Colonic mucosa (tissue), 4 donors: ENCODE measurements at regions of chrX and their contacts with region 1.

Region 1: GRCh38 chrX:13487731-13488523 is 81.5 kb upstream of the EGFL6 start:
- DNase-seq: peak; percentile 70
- H3K4me3 ChIP-seq: no peak overlapping the region
- H3K27ac ChIP-seq: peak overlapping the region; percentile 65
- H3K4me1 ChIP-seq: no peaks in the 10 kb centered on the region
- H3K27me3 ChIP-seq: no peaks in the 10 kb centered on the region
- CTCF ChIP-seq: peak; percentile 45

Region 2: GRCh38 chrX:12946838-12947544 is 540.9 kb before region 1 on chrX:
- intact Hi-C with region 1: loop called (anchors 5 kb)
- DNase-seq: peak; percentile 87
- H3K4me3 ChIP-seq: no peak overlapping the region
- H3K27ac ChIP-seq: peak overlapping the region; percentile 60
- H3K4me1 ChIP-seq: peaks cover 3% of the 10 kb centered on the region
- H3K27me3 ChIP-seq: no peaks in the 10 kb centered on the region
- CTCF ChIP-seq: peak; percentile 99

Region 3: GRCh38 chrX:13550346-13550745 is 62.4 kb after region 1 on chrX:
- intact Hi-C with region 1: no loop called
- DNase-seq: no peak
- H3K4me3 ChIP-seq: no peak overlapping the region
- H3K27ac ChIP-seq: no peak overlapping the region
- H3K4me1 ChIP-seq: no peaks in the 10 kb centered on the region
- H3K27me3 ChIP-seq: peaks cover 10% of the 10 kb centered on the region
- CTCF ChIP-seq: no peak